Right ventricle myocardium superior (tissue), 1 donor: ENCODE measurements at regions of chr17 and their contacts with region 1.

Region 1: DNA sequence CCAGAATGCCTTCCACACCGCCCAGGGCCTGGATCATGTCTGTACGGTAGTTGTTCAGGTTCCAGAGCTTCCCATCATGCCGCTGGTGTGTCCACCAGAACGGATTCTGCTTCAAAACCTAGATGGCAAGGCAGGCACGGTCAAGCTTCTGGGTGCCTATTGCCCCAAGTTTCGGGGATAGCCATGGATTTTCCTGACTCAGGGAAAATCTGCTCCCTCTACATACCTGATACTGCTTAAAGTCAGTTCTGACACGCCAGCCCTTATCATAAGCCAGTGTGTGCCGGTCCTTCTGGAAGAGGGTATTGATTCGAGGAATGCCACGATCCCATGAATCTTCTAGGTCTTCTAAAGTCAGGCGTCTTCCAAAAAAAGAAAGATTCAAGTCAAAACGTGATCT is 11.4 kb upstream of the RILP start:
- DNase-seq: no peak
- ATAC-seq: no peak

Region 2: DNA sequence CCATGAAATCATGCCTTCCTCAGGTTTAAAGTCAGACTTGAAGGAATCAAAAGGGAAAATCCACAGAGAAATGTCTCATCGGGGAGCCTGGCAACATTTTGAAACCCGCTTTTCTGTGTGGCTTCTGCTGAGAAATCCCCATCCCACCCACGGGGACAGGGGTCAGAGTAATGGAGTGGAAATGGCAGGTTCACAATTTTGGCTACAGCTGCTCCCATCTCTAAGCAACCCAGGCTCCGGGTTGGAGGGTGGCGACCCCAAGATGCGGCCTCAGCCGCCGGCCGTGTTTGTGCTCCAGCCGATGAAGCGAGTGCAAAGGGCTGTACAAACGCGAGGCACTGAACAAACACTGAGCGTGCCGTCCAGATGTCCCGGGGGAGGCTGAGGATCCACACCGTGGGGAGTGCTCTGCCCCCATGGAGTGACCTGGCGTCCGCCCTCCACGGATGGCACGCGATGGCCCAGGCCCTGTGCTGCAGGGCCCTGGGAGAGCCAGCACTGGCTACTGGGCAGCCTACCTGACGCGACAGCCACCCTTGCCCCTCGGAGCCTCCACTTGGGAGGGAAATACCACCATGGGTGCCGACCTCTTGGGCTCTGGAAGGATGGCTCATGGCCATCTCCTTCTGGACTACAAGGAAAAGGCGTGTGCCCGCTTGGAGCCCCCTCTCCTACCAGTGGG is 54.6 kb before region 1 on chr17:
- intact Hi-C with region 1: no loop called
- DNase-seq: no peak
- ATAC-seq: no peak

Region 3: DNA sequence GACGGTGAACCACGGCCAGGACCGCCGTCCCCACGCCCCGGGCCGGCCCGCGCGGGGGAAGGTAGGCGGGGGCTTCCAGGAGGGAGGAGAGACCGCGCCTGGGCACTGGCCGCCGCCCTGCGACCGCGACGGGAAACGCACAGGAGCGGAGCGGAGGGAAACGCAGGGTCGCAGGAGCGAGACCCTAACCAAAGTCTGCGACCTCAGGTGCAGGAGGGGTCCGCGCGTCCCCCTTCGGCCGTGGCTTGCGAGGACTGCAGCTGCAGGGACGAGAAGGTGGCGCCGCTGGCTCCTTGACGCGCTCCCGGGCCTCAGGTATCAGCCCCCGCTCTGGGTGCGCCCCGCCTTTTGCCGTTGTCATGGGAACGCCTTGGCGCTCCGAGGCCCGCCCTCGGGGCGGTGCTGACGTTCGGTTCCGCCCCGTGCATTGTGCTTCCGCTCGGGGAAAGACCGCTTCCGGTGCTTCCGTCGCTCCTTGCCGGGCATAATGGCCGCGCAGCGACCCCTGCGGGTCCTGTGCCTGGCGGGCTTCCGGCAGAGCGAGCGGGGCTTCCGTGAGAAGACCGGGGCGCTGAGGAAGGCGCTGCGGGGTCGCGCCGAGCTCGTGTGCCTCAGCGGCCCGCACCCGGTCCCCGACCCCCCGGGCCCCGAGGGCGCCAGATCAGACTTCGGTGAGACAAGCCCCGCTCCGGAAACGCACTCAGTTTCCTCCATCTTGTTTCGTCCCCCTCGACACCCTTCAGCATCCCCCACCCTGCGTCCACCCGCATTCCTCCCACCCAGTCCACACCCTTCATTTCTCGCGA is 380.7 kb after region 1 on chr17 and contains the start of gene OVCA2:
- intact Hi-C with region 1: loop called (anchors 10 kb)
- DNase-seq: peak; percentile 96
- ATAC-seq: peak; percentile 97
- total RNA-seq, gene OVCA2: 13.7 TPM